Activated CD4-positive, alpha-beta T cell treated with anti-CD3 and anti-CD28 coated beads, Interleukin-2, amount 10 ng/mL, durations not matched to agents 24 days and 14 days (primary cell): ENCODE measurements at regions of chr1 and their contacts with region 1.

Region 1: GRCh38 chr1:67760030-67760821 is 73.0 kb downstream of the GNG12 start:
- DNase-seq: peak; percentile 85
- H3K4me3 Mint-ChIP-seq: no peak overlapping the region
- H3K27ac Mint-ChIP-seq: no peak overlapping the region
- H3K4me1 Mint-ChIP-seq: peaks cover 3% of the 10 kb centered on the region
- H3K27me3 Mint-ChIP-seq: peaks cover 23% of the 10 kb centered on the region

Region 2: DNA sequence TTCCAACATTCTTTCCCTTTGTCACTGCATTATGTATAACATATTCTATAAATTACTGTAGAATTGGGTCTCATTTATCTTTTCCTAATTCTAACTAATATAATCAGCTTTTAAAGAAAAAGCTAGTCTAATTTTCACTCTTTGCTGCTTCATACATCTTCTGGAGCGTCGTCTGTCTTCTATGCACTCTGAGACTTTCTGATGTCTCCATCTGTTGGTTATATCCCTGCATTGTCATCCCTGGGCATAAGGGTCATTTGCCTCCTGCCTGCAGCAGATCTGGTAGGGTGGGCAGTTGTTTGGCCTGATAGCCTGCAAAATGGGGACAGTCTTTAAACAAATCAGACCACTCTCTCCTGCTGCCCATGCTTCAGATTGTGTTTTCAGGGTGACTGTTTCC is 1048.8 kb before region 1 on chr1:
- intact Hi-C with region 1: no loop called
- DNase-seq: no peak
- H3K4me3 Mint-ChIP-seq: no peak overlapping the region
- H3K27ac Mint-ChIP-seq: no peak overlapping the region
- H3K4me1 Mint-ChIP-seq: no peaks in the 10 kb centered on the region
- H3K27me3 Mint-ChIP-seq: peaks cover 25% of the 10 kb centered on the region

Region 3: GRCh38 chr1:67532452-67533216 is 227.6 kb before region 1 on chr1:
- intact Hi-C with region 1: loop called (anchors 1 kb)
- DNase-seq: peak; percentile 59
- H3K4me3 Mint-ChIP-seq: no peak overlapping the region
- H3K27ac Mint-ChIP-seq: no peak overlapping the region
- H3K4me1 Mint-ChIP-seq: peaks cover 2% of the 10 kb centered on the region
- H3K27me3 Mint-ChIP-seq: peaks cover 6% of the 10 kb centered on the region

Region 4: DNA sequence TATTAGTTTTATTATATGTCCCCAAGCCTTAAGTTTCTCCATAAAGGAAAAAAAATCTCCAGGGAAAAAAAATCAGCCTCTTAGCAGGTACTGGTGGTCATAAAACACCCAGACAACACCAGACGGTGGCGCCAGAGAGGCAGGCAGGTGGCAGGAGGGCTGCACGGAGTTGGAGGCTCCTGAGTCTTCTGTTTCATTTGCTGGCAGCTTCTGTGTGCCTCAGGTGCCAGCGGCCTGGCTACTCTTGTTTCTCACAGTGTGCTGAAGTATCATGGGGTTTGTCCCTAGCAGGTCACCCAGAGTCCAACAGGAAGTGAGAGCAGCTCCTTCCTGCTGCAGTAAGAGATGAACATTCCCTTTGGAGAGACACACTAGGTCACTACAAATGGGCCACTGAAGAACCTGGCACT is 198.5 kb before region 1 on chr1:
- intact Hi-C with region 1: loop called (anchors 1 kb)
- DNase-seq: peak; percentile 94
- H3K4me3 Mint-ChIP-seq: no peak overlapping the region
- H3K27ac Mint-ChIP-seq: no peak overlapping the region
- H3K4me1 Mint-ChIP-seq: peaks cover 6% of the 10 kb centered on the region
- H3K27me3 Mint-ChIP-seq: peaks cover 8% of the 10 kb centered on the region